ENCODE measurements at regions of chr6 and their contacts with region 1.

Region 1: GRCh38 chr6:43629505-43630300 is 639 bp upstream of the GTPBP2 start:
- DNase-seq: peak; percentile 98
- ATAC-seq: peak; percentile 86
- H3K4me3 ChIP-seq: peak overlapping the region; percentile 64 to 85 (median 76)
- H3K27ac ChIP-seq: peak overlapping the region; percentile 87
- H3K4me1 ChIP-seq: peaks cover 36% of the 10 kb centered on the region
- H3K27me3 ChIP-seq: no peaks in the 10 kb centered on the region; a peak in 1 of 5 replicates
- CTCF ChIP-seq: no peak; the same call in 1 of the 2 replicates
- EP300 ChIP-seq: 0 out of 4 replicates have a peak, but pooled peaks of 1 of the 2 experiments have one; percentile 16
- POLR2A ChIP-seq: peak; percentile 86 to 93
- RAD21 ChIP-seq: 0 out of 2 replicates have a peak, but pooled peaks have one; percentile 15

Region 2: DNA sequence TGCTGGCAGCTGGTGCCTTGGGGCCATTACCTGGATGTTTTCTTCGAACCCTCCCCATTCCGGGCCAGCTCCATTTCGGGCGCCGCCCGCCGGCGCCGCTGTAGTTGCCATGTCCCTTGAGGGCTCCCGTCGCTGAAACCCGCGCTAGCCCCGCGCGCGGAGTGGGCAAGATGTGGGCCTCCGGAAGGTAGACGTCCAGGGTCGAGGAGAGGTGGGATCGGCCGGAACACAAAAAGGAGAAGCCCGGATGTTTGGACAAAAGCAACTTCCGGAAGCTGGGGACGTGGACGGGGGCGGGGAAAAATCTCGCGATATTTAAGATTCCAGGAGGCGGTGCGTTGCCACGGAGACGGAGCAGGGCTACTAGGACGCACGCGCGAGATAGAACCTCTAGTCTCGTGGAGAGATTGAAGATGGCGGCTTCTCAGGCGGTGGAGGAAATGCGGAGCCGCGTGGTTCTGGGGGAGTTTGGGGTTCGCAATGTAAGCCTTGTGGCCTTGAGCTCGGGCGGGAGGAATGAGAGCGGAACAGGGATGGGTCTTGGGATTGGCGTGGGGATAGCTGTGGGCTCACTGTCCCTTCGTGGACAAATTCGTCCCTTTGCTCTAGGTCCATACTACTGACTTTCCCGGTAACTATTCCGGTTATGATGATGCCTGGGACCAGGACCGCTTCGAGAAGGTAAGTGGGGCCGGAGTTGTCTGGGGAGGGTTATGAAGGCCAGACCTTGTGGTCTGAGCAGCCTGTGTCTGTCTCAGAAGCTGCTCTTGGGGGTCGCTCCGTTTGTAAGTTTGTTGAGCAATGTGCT is 112.8 kb before region 1 on chr6 and contains the starts of genes POLR1C and YIPF3:
- CTCF ChIA-PET with region 1: no interaction called
- POLR2A ChIA-PET with region 1: interaction called, 11 read pairs
- in situ Hi-C with region 1: no loop called
- intact Hi-C with region 1: no loop called
- DNase-seq: peak; percentile 98
- ATAC-seq: peak; percentile 90
- H3K4me3 ChIP-seq: peak within 1 kb of the TSS; percentile 85 to 99 (median 93)
- H3K27ac ChIP-seq: peak within 1 kb of the TSS; percentile 74
- H3K4me1 ChIP-seq: peaks cover 36% of the 10 kb centered on the region
- H3K27me3 ChIP-seq: peaks cover 0 to 5% of the 10 kb centered on the region in 2 experiments; a peak in 1 of 5 replicates
- CTCF ChIP-seq: no peak
- EP300 ChIP-seq: peak in 1 of 2 experiments; percentile 9; a peak in 1 of 4 replicates
- POLR2A ChIP-seq: peak in 1 of 2 experiments; percentile 97; a peak in 2 of 4 replicates
- RAD21 ChIP-seq: peak; percentile 37; the same call in 1 of the 2 replicates
- total RNA-seq, gene POLR1C: 72.2 and 75.6 TPM in 2 replicates
- total RNA-seq, gene YIPF3: 51.2 and 107 TPM in 2 replicates

Region 3: GRCh38 chr6:43532201-43532600 is 97.5 kb before region 1 on chr6:
- CTCF ChIA-PET with region 1: no interaction called
- POLR2A ChIA-PET with region 1: no interaction called
- in situ Hi-C with region 1: no loop called
- intact Hi-C with region 1: no loop called
- DNase-seq: no peak
- ATAC-seq: no peak
- H3K4me3 ChIP-seq: no peak overlapping the region
- H3K27ac ChIP-seq: no peak overlapping the region
- H3K4me1 ChIP-seq: no peaks in the 10 kb centered on the region
- H3K27me3 ChIP-seq: no peaks in the 10 kb centered on the region
- CTCF ChIP-seq: no peak
- EP300 ChIP-seq: no peak
- POLR2A ChIP-seq: no peak
- RAD21 ChIP-seq: no peak

Region 4: GRCh38 chr6:43613721-43614393 is 15.8 kb before region 1 on chr6:
- CTCF ChIA-PET with region 1: no interaction called
- POLR2A ChIA-PET with region 1: interaction called, 50 read pairs
- in situ Hi-C with region 1: no loop called
- intact Hi-C with region 1: no loop called
- DNase-seq: no peak
- ATAC-seq: no peak
- H3K4me3 ChIP-seq: no peak overlapping the region
- H3K27ac ChIP-seq: no peak overlapping the region
- H3K4me1 ChIP-seq: 0 out of 2 replicates have a peak, but pooled peaks cover 5% of the 10 kb centered on the region
- H3K27me3 ChIP-seq: no peaks in the 10 kb centered on the region
- CTCF ChIP-seq: no peak
- EP300 ChIP-seq: no peak
- POLR2A ChIP-seq: no peak
- RAD21 ChIP-seq: no peak

Region 5: DNA sequence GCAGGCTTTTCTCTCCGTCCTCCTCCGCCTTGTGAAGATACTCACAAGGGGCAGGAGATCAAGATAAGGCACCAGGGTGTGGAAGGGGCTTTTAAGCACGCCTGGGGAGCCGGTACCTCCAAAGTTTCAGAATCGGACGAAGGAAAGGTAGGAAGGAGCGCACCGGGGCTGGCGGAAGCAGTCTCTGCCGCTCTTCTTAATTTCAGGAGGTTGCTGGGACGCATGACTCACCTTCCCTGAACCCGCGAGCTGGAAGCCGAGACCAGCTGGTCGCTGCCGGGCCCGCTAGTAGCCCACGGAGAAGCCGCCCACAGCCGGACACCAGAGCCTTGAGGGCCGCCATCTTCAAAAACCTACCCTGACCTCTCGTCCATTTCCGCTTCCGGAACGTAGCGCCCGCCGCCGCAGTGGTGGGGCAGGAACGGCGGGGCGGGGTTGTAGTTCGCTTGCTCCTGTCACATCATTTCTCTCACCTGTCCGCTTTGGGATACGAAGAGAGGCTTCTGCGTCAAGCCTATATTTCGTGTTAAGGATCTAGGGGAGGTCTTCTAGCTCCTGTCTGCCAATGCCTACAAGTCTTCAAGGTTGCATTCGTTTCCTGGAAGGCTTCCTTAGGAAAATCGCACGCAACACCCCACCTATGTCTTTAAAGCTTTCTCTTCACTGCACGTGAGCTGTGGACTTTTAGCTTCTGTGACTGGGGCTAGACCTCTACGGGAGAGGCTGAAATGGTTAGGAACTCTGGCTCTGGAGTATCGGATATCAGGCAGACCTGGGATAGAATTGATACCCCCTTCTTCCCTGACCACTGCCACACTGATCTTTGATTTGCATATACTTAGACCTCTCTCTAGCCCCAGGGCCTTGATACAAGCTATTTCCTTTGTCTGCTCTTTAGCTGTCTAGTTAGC is 58.0 kb after region 1 on chr6 and contains the start of gene MRPS18A:
- CTCF ChIA-PET with region 1: no interaction called
- POLR2A ChIA-PET with region 1: interaction called, 14 read pairs
- in situ Hi-C with region 1: no loop called
- intact Hi-C with region 1: no loop called
- DNase-seq: peak; percentile 78
- ATAC-seq: peak; percentile 99
- H3K4me3 ChIP-seq: peak within 1 kb of the TSS; percentile 93 to 98 (median 96)
- H3K27ac ChIP-seq: peak within 1 kb of the TSS; percentile 58
- H3K4me1 ChIP-seq: peaks cover 50% of the 10 kb centered on the region
- H3K27me3 ChIP-seq: no peaks in the 10 kb centered on the region; a peak in 1 of 5 replicates
- CTCF ChIP-seq: no peak
- EP300 ChIP-seq: no peak; a peak in 1 of 4 replicates
- POLR2A ChIP-seq: peak; percentile 80 to 82
- RAD21 ChIP-seq: no peak
- total RNA-seq, gene MRPS18A: 89.1 and 100 TPM in 2 replicates

Region 6: GRCh38 chr6:44113414-44113813 is 483.7 kb after region 1 on chr6:
- CTCF ChIA-PET with region 1: no interaction called
- POLR2A ChIA-PET with region 1: interaction called, 10 read pairs
- in situ Hi-C with region 1: no loop called
- intact Hi-C with region 1: no loop called
- DNase-seq: no peak
- ATAC-seq: peak; percentile 53
- H3K4me3 ChIP-seq: no peak overlapping the region
- H3K27ac ChIP-seq: peak overlapping the region; percentile 19
- H3K4me1 ChIP-seq: peaks cover 86% of the 10 kb centered on the region
- H3K27me3 ChIP-seq: no peaks in the 10 kb centered on the region
- CTCF ChIP-seq: peak; percentile 32; the same call in 1 of the 2 replicates
- EP300 ChIP-seq: no peak
- POLR2A ChIP-seq: no peak
- RAD21 ChIP-seq: peak; percentile 32; the same call in 1 of the 2 replicates